Naive thymus-derived CD4-positive, alpha-beta T cell (primary cell): ENCODE measurements at regions of chr9 and their contacts with region 1.

Region 1: DNA sequence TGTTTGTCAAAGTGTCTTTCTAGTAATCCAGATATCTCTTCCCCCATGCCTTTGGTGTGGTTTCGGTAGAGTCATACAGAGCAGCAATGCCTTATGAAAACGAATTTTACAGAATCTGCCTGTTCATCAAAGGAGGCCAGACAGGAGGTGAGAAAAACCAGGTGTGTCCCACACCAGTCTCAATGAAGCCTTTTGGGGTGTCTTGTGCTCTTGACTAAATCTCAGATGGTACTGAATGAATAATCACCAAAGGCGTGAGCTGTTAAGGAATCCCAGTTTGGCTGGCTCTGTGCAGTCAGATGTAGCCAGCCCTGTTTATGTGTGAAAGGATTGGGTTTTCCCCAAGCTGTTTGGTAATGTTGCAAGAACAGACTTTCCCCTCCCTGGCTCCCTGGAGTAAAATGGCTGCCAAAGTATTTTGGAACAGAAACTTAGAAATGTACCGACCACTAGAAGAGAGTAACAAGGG is 70.8 kb upstream of the CDKN2B start:
- DNase-seq: peak in 8 of 9 donors; percentile 10 to 67 (median 50)
- ATAC-seq: peak; percentile 90
- H3K4me3 ChIP-seq: no peak overlapping the region
- H3K4me3 Mint-ChIP-seq: peak overlapping the region in 9 of 10 donors; percentile 3 to 69 (median 43)
- H3K27ac ChIP-seq: no peak overlapping the region
- H3K27ac Mint-ChIP-seq: peak overlapping the region in 5 of 9 donors; percentile 6 to 83 (median 10)
- H3K4me1 ChIP-seq: peaks cover 13 to 14% of the 10 kb centered on the region in 2 donors
- H3K4me1 Mint-ChIP-seq: peaks cover 22 to 59% (median 33%) of the 10 kb centered on the region in 7 donors
- H3K27me3 ChIP-seq: no peaks in the 10 kb centered on the region
- H3K27me3 Mint-ChIP-seq: peaks cover 11 to 53% (median 12%) of the 10 kb centered on the region in 5 donors

Region 2: DNA sequence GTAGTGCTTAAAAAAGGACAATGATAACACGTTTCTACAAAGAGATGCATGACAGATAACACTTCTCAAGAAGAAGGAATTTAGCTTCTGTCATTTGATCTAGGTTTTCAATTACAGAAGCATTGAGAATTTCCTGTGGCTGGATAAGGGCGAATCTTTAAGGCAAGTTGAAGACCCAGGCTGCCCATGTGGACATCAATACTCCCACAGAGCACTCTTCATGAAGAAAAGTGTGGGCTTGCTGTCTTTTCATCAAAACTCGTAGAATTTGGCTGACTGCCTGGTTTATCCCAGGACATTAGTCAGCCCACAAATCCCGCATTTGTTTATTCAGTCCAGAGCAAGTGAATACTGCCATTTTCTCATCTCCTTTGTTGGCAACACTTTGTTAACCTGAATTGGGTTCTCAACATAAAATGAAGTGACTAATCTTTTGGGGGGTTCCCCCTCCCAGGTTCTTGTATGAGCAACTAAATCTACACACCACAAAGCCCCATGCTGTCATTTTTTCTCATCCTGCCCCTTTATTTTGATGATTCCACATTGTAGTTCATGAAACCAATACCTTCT is 27.4 kb before region 1 on chr9:
- CTCF ChIA-PET with region 1: no interaction called
- POLR2A ChIA-PET with region 1: no interaction called
- intact Hi-C with region 1: loop called in 1 of 2 experiments (anchors 1 kb)
- DNase-seq: peak in 2 of 9 donors; percentile 10 to 34
- ATAC-seq: peak; percentile 49
- H3K4me3 ChIP-seq: no peak overlapping the region
- H3K4me3 Mint-ChIP-seq: peak overlapping the region in 2 of 10 donors; percentile 7 to 28
- H3K27ac ChIP-seq: no peak overlapping the region
- H3K27ac Mint-ChIP-seq: peak overlapping the region in 1 of 9 donors; percentile 70
- H3K4me1 ChIP-seq: peaks cover 14 to 23% of the 10 kb centered on the region in 2 donors
- H3K4me1 Mint-ChIP-seq: peaks cover 11 to 37% (median 29%) of the 10 kb centered on the region in 7 donors
- H3K27me3 ChIP-seq: no peaks in the 10 kb centered on the region
- H3K27me3 Mint-ChIP-seq: peaks cover 0 to 23% (median 0%) of the 10 kb centered on the region in 5 donors

Region 3: DNA sequence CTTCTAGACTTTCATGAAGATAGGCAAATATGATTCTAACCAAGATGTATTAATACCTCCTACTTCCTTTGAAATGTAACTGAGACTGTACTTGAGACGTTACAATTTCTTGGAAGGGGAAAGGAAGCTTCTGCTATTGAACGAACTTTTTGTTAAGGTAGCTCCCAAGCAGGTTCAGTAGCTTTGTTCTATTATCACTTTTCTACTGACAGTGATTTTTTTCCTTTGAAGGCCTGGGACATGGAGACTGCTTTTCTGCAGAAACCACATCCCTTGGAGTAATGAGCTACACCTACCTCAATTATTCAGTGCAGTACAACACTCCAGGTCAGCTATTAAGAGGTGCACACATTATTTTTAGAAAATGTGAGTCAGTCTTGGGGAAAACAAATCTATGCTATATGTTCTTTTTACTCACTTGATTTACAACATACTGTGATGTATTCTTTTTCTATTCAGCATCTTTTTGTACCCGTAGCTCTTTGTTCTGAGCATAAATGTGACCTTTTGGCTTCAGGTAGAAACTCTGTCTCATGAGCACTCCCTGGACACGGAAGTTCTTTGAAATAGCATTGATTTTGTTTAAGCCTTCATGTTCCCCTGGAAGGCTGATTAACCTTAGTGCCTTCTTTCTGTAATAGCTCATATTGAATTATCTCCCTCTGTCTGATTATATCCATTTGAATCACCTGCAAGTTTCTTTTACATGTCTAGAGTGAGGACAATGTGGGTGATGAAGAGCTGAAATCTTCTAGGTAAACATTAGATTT is 14.3 kb before region 1 on chr9:
- CTCF ChIA-PET with region 1: no interaction called
- POLR2A ChIA-PET with region 1: no interaction called
- intact Hi-C with region 1: loop called in 1 of 2 experiments (anchors 2 kb)
- DNase-seq: peak in 2 of 9 donors; percentile 16 to 18
- ATAC-seq: peak; percentile 44
- H3K4me3 ChIP-seq: no peak overlapping the region
- H3K4me3 Mint-ChIP-seq: peak overlapping the region in 6 of 10 donors; percentile 2 to 55 (median 24)
- H3K27ac ChIP-seq: no peak overlapping the region
- H3K27ac Mint-ChIP-seq: peak overlapping the region in 5 of 9 donors; percentile 17 to 70 (median 56)
- H3K4me1 ChIP-seq: peaks cover 0 to 9% of the 10 kb centered on the region in 2 donors
- H3K4me1 Mint-ChIP-seq: peaks cover 16 to 46% (median 28%) of the 10 kb centered on the region in 7 donors
- H3K27me3 ChIP-seq: no peaks in the 10 kb centered on the region
- H3K27me3 Mint-ChIP-seq: peaks cover 0 to 40% (median 0%) of the 10 kb centered on the region in 5 donors

Region 4: DNA sequence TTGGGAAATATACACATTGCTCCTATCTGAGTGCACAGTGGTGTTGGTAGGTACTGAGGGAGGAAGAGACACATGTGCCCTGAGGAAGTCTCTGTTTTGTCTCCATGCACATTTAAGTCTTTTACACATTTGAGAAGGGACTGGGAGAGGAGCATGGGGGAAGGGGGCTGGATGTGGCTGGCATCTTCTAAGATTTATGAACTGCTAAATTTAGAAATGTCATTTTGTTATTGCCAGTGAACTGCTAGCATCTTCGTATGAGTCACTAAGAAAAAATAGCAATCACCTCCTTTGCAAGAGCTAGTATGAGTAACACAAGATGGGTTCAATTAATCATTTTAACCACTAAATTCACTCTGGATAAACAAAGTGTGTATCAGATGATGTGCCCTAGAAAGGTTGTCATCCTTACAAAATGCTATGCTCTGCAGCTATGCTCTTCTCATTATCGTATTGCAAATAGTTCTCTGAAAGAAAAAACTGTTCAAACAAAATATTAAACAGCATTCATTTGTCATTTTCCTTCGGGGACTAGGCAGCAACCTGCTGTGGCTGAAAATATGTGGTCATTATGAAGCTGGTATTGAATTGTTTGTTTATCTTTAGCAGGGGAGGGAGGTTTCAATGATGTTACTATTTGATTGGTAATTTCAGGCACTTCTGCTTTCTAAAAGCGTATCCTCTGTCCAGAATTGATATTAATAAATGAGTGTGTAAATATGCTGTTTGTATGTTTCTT is 603.2 kb after region 1 on chr9:
- CTCF ChIA-PET with region 1: no interaction called
- POLR2A ChIA-PET with region 1: no interaction called
- intact Hi-C with region 1: no loop called
- DNase-seq: no peak
- ATAC-seq: no peak
- H3K4me3 ChIP-seq: no peak overlapping the region
- H3K4me3 Mint-ChIP-seq: no peak overlapping the region
- H3K27ac ChIP-seq: no peak overlapping the region
- H3K27ac Mint-ChIP-seq: peak overlapping the region in 1 of 9 donors; percentile 40
- H3K4me1 ChIP-seq: no peaks in the 10 kb centered on the region
- H3K4me1 Mint-ChIP-seq: peaks cover 0 to 8% (median 0%) of the 10 kb centered on the region in 7 donors
- H3K27me3 ChIP-seq: no peaks in the 10 kb centered on the region
- H3K27me3 Mint-ChIP-seq: no peaks in the 10 kb centered on the region